RWPE1 (cell line): ENCODE measurements at regions of chr20 and their contacts with region 1.

Region 1: GRCh38 chr20:45998761-45999160 is 9.9 kb upstream of the MMP9 start:
- DNase-seq: no peak
- H3K27ac ChIP-seq: no peak overlapping the region
- CTCF ChIP-seq: no peak

Region 2: DNA sequence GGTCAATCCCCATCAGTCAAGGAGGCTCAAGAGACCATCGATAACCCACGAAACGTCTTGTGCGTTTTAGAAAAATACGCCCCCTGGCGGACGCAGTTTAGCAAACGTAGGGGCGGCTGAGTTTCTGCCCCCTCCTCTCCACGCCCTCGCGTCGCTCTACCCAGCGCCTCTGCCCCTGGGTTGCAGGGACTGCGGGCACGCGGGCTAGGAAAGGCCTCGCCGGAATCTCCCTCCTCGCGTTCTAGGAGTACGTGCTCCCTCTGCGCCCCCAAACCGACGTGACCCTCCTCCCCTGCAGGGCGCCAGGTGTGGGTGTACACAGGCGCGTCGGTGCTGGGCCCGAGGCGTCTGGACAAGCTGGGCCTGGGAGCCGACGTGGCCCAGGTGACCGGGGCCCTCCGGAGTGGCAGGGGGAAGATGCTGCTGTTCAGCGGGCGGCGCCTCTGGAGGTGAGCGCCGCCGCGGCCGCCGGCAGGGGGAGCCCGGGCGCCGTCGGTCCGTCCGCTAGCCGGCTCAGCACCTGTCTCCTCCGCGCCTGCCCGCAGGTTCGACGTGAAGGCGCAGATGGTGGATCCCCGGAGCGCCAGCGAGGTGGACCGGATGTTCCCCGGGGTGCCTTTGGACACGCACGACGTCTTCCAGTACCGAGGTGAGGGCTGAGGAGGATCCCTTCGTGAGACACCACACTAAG is 15.2 kb after region 1 on chr20:
- CTCF ChIA-PET with region 1: interaction called, 24 read pairs
- POLR2A ChIA-PET with region 1: interaction called, 5 read pairs
- DNase-seq: peak; percentile 83
- H3K27ac ChIP-seq: no peak overlapping the region
- CTCF ChIP-seq: peak; percentile 100